Endothelial cell of umbilical vein (primary cell): ENCODE measurements at regions of chr4 and their contacts with region 1.

Region 1: GRCh38 chr4:2761035-2761923 is 5.1 kb upstream of the TNIP2 start:
- DNase-seq: peak; percentile 61
- H3K4me3 ChIP-seq: no peak overlapping the region
- H3K27ac ChIP-seq: no peak overlapping the region
- H3K4me1 ChIP-seq: peaks cover 8% of the 10 kb centered on the region
- H3K27me3 ChIP-seq: no peaks in the 10 kb centered on the region
- CTCF ChIP-seq: peak in 1 of 2 donors; percentile 32
- POLR2A ChIP-seq: no peak

Region 2: GRCh38 chr4:2792711-2793585 is 31.7 kb after region 1 on chr4 and contains the start of gene SH3BP2:
- CTCF ChIA-PET with region 1: interaction called, 14 read pairs
- POLR2A ChIA-PET with region 1: no interaction called
- dilution Hi-C with region 1: no loop called
- intact Hi-C with region 1: no loop called
- DNase-seq: peak; percentile 69
- H3K4me3 ChIP-seq: peak within 1 kb of the TSS; percentile 26 to 60 (median 49)
- H3K27ac ChIP-seq: peak within 1 kb of the TSS; percentile 76
- H3K4me1 ChIP-seq: peaks cover 44% of the 10 kb centered on the region
- H3K27me3 ChIP-seq: no peaks in the 10 kb centered on the region
- CTCF ChIP-seq: no peak
- POLR2A ChIP-seq: peak; percentile 23
- total RNA-seq, gene SH3BP2: 69.2 and 73.1 TPM in 2 replicates

Region 3: GRCh38 chr4:2817701-2818350 is 56.5 kb after region 1 on chr4:
- CTCF ChIA-PET with region 1: interaction called, 34 read pairs
- POLR2A ChIA-PET with region 1: no interaction called
- dilution Hi-C with region 1: no loop called
- intact Hi-C with region 1: loop called (anchors 5 kb)
- DNase-seq: peak; percentile 22
- H3K4me3 ChIP-seq: peak overlapping the region in 1 of 3 experiments; percentile 54
- H3K27ac ChIP-seq: no peak overlapping the region
- H3K4me1 ChIP-seq: peaks cover 10% of the 10 kb centered on the region
- H3K27me3 ChIP-seq: no peaks in the 10 kb centered on the region
- CTCF ChIP-seq: no peak
- POLR2A ChIP-seq: no peak

Region 4: GRCh38 chr4:2862528-2862927 is 101.2 kb after region 1 on chr4:
- CTCF ChIA-PET with region 1: interaction called, 21 read pairs
- POLR2A ChIA-PET with region 1: no interaction called
- dilution Hi-C with region 1: no loop called
- intact Hi-C with region 1: no loop called
- DNase-seq: peak; percentile 47
- H3K4me3 ChIP-seq: no peak overlapping the region
- H3K27ac ChIP-seq: no peak overlapping the region
- H3K4me1 ChIP-seq: peaks cover 62% of the 10 kb centered on the region
- H3K27me3 ChIP-seq: no peaks in the 10 kb centered on the region
- CTCF ChIP-seq: no peak
- POLR2A ChIP-seq: no peak

Region 5: DNA sequence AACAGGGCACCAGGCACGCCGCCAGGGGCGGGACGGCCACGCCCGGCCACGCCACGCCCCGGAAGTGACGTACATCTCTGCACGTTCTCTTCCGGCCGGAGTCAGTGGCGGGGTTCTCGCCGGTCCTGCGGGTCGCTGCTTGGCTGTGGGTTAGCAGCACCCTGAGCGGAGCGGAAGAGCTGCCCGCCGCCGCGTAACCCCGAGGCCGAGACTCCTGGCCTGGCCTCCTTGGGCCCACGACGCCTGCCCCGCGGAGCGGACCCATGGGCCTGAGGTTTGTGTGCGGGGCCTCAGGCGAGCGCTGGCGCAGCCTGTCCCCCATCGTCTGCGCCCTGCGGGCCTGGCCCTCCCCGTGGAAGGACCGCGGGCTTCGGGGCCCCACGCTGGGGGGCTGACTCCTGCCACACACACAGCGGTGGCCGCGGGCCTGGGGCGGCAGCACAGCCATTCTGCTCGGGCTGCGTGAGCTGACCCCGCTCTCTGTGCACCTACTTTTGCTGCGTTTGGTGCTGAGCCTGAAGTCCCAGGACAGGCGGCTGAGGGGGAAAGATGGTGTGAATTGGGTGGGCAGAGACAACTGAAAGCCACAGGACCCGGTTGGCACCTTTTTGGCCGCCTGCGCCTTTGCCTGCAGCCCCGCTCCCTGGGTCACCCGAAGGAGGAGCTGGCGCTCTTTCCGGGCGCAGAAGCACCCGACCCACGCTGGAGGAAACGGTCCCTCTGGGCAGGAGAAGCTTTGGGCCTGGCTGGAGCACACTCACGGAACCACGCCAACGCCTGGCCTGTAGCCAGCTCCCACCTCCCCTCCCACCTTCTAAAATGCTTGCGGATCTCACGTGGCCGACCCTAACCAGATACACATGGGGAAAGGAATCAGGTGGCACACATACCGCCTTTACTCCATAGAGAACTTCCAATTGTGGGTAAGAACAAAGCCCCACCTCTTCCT is 173.8 kb after region 1 on chr4:
- CTCF ChIA-PET with region 1: interaction called, 6 read pairs
- POLR2A ChIA-PET with region 1: no interaction called
- dilution Hi-C with region 1: no loop called
- intact Hi-C with region 1: loop called (anchors 1 kb)
- DNase-seq: peak; percentile 86
- H3K4me3 ChIP-seq: peak overlapping the region; percentile 37 to 69 (median 65)
- H3K27ac ChIP-seq: peak overlapping the region; percentile 61
- H3K4me1 ChIP-seq: peaks cover 28% of the 10 kb centered on the region
- H3K27me3 ChIP-seq: no peaks in the 10 kb centered on the region
- CTCF ChIP-seq: no peak
- POLR2A ChIP-seq: peak; percentile 86